ENCODE measurements at regions of chr15 and their contacts with region 1.

Region 1: DNA sequence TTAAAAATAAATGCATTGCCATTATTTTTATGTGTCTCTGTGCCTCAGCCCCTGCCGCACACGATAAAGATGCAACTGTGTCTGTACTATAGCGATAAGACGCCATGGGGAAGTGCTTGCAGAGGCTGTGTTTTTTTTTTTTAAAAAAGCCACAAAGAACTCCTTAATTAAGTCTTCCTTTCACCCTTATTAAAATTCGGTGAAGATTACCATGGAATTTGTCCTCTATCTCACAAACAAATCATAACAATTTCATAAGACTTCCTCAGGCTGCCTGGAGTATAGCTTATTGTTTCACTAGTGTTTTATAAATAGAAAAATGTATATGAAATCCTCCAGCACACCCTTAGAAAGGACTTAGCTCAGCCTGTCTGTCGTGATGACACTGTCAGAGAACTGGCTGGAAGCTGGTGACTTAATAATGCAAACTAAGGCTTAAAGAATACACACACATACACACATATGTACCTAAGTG is 374.8 kb upstream of the SLCO3A1 start:
- DNase-seq: no peak
- ATAC-seq: no peak
- H3K4me3 ChIP-seq: no peak overlapping the region
- H3K4me3 Mint-ChIP-seq: no peak overlapping the region
- H3K27ac ChIP-seq: no peak overlapping the region
- H3K27ac Mint-ChIP-seq: no peak overlapping the region
- H3K4me1 ChIP-seq: peaks cover 9% of the 10 kb centered on the region
- H3K4me1 Mint-ChIP-seq: peaks cover 37% of the 10 kb centered on the region
- H3K27me3 ChIP-seq: no peaks in the 10 kb centered on the region
- H3K27me3 Mint-ChIP-seq: no peaks in the 10 kb centered on the region
- CTCF ChIP-seq: no peak

Region 2: GRCh38 chr15:91357011-91357410 is 121.7 kb before region 1 on chr15:
- CTCF ChIA-PET with region 1: no interaction called
- POLR2A ChIA-PET with region 1: no interaction called
- intact Hi-C with region 1: no loop called
- DNase-seq: no peak
- ATAC-seq: no peak
- H3K4me3 ChIP-seq: no peak overlapping the region
- H3K4me3 Mint-ChIP-seq: no peak overlapping the region
- H3K27ac ChIP-seq: no peak overlapping the region
- H3K27ac Mint-ChIP-seq: no peak overlapping the region
- H3K4me1 ChIP-seq: no peaks in the 10 kb centered on the region
- H3K4me1 Mint-ChIP-seq: no peaks in the 10 kb centered on the region
- H3K27me3 ChIP-seq: no peaks in the 10 kb centered on the region
- H3K27me3 Mint-ChIP-seq: no peaks in the 10 kb centered on the region
- CTCF ChIP-seq: no peak

Region 3: GRCh38 chr15:91444656-91445055 is 34.1 kb before region 1 on chr15:
- CTCF ChIA-PET with region 1: no interaction called
- POLR2A ChIA-PET with region 1: no interaction called
- intact Hi-C with region 1: loop called in 1 of 2 experiments (anchors 5 kb)
- DNase-seq: no peak
- ATAC-seq: no peak
- H3K4me3 ChIP-seq: no peak overlapping the region
- H3K4me3 Mint-ChIP-seq: no peak overlapping the region
- H3K27ac ChIP-seq: no peak overlapping the region
- H3K27ac Mint-ChIP-seq: no peak overlapping the region
- H3K4me1 ChIP-seq: peaks cover 6% of the 10 kb centered on the region
- H3K4me1 Mint-ChIP-seq: peaks cover 7% of the 10 kb centered on the region
- H3K27me3 ChIP-seq: no peaks in the 10 kb centered on the region
- H3K27me3 Mint-ChIP-seq: no peaks in the 10 kb centered on the region
- CTCF ChIP-seq: no peak